Activated CD4-positive, alpha-beta T cell treated with anti-CD3 and anti-CD28 coated beads for 36 hours (primary cell): ENCODE measurements at regions of chr10 and their contacts with region 1.

Region 1: DNA sequence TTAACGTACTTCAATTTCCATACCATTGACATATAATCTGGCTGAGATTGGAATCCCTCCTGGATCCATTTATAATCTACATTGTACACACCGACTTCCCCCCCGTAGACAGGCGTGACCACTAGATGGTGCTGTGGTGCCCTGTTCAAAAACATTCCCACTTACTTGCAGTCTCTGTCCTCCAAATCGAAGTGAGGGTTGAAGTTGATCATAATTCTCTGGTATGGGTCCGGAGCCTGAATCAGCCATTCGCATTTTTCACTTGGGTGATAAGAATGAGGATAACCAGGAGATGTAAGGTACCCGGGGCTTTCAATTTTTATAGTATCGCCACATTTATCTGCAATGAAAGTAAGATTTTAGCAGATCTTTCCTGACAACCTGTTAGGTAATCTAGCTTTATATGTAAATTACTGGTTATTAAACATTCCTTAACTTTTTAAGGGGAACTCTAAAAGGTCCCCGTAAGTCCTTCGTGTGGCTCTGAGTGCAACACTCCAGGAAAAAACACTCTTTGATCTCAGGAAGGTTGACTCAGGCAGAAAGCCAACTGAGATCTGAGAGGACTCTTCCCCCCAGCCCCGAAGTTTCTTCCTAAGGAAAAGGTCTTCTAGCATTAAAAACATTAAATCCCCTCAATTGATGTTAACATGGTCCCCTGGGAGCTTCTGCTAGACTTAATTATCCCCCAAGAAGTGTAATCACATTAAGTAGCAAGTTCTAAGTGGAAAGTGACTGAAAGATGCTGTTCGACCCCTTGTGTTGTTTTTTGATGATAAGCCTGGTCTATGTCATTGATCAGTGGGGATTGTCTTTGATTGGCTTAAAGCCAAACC is 3.7 kb downstream of the NRP1 start:
- DNase-seq: peak; percentile 89
- ATAC-seq: peak; percentile 37
- H3K4me3 Mint-ChIP-seq: no peak overlapping the region
- H3K27ac Mint-ChIP-seq: no peak overlapping the region
- H3K4me1 Mint-ChIP-seq: peaks cover 16% of the 10 kb centered on the region
- H3K27me3 Mint-ChIP-seq: peaks cover 62% of the 10 kb centered on the region

Region 2: DNA sequence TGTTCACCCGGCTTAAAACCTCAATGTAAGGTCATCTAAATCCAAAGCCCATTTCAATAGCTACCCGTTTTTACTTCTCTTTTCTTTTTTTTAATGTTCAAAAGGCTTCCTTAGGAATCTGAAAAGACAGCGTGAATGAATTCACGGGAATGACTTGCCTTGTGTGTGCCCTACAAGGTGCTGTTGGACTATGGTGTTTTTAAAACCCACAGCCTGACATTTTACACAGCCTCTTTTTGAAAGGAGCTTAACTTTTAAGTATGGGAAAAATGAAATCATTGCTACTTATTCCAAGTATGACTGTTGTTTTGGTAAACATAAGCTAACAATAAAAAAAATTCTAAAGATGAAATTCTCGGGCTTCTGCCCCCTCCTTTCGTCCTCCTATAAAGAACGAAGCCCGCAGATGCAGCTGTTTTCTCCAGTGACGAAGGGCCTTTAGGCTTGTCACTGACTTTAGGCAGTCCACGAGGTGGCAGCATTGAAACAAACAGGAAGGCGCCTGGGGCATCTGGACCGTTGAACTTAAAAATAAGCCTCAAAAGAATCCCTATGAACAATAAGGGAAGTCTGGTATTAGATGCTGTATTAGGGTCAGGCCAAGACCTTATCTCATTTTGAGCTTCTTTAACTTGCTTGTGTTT is 137.6 kb before region 1 on chr10:
- CTCF ChIA-PET with region 1: interaction called, 23 read pairs
- POLR2A ChIA-PET with region 1: no interaction called
- intact Hi-C with region 1: loop called (anchors 1 to 2 kb)
- DNase-seq: peak; percentile 88
- ATAC-seq: peak; percentile 88
- H3K4me3 Mint-ChIP-seq: no peak overlapping the region
- H3K27ac Mint-ChIP-seq: no peak overlapping the region
- H3K4me1 Mint-ChIP-seq: no peaks in the 10 kb centered on the region
- H3K27me3 Mint-ChIP-seq: peaks cover 26% of the 10 kb centered on the region

Region 3: DNA sequence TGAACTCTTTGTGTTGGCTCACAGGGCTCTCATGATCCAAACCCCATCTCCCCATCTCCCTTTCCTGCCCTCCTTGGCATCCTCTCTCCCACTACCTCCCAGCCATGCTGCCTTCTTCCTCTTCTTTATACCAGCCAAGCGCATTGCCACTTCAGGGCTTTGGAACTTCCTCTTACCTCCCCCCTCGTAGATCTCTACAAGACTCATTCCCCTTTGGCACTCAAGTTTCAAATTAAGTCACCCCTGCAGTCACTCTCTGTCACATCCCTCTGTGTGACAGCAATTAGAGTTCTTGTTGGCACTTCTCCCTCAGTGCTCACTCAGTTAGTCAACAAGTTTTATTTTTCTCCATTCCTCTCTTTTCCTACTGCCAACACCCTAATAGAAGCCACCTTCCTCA is 24.5 kb after region 1 on chr10:
- CTCF ChIA-PET with region 1: no interaction called
- POLR2A ChIA-PET with region 1: no interaction called
- intact Hi-C with region 1: no loop called
- DNase-seq: no peak
- ATAC-seq: peak; percentile 64
- H3K4me3 Mint-ChIP-seq: no peak overlapping the region
- H3K27ac Mint-ChIP-seq: no peak overlapping the region
- H3K4me1 Mint-ChIP-seq: no peaks in the 10 kb centered on the region
- H3K27me3 Mint-ChIP-seq: peaks cover 20% of the 10 kb centered on the region

Region 4: GRCh38 chr10:33381451-33382242 is 50.9 kb after region 1 on chr10:
- CTCF ChIA-PET with region 1: no interaction called
- POLR2A ChIA-PET with region 1: no interaction called
- intact Hi-C with region 1: no loop called
- DNase-seq: no peak
- ATAC-seq: no peak
- H3K4me3 Mint-ChIP-seq: no peak overlapping the region
- H3K27ac Mint-ChIP-seq: no peak overlapping the region
- H3K4me1 Mint-ChIP-seq: peaks cover 17% of the 10 kb centered on the region
- H3K27me3 Mint-ChIP-seq: peaks cover 28% of the 10 kb centered on the region

Region 5: GRCh38 chr10:33421789-33422462 is 91.2 kb after region 1 on chr10:
- CTCF ChIA-PET with region 1: no interaction called
- POLR2A ChIA-PET with region 1: no interaction called
- intact Hi-C with region 1: loop called in 1 of 2 experiments (anchors 10 kb)
- DNase-seq: no peak
- ATAC-seq: no peak
- H3K4me3 Mint-ChIP-seq: no peak overlapping the region
- H3K27ac Mint-ChIP-seq: no peak overlapping the region
- H3K4me1 Mint-ChIP-seq: no peaks in the 10 kb centered on the region
- H3K27me3 Mint-ChIP-seq: peaks cover 33% of the 10 kb centered on the region

Region 6: DNA sequence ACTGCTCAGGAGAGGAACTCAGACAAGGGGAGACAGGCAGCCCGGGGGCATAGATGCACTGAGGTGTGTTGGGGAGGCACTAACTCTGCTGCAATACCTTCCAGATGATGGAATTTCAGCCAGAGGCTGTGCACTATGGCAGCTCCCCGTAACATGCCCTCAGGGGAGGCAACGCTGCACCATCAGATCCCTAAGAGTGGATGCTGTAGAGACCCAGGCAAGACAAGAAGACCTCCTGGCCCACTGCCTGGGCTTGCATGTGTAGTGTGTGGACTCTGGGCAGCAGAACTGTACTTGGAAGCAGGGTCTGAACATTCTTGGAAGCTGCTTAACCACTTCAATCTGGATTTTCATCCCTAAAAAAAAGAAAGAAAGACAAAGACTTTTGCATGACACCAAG is 301.2 kb after region 1 on chr10:
- CTCF ChIA-PET with region 1: no interaction called
- POLR2A ChIA-PET with region 1: no interaction called
- intact Hi-C with region 1: loop called in 1 of 2 experiments (anchors 10 kb)
- DNase-seq: no peak
- ATAC-seq: no peak
- H3K4me3 Mint-ChIP-seq: no peak overlapping the region
- H3K27ac Mint-ChIP-seq: no peak overlapping the region
- H3K4me1 Mint-ChIP-seq: no peaks in the 10 kb centered on the region
- H3K27me3 Mint-ChIP-seq: peaks cover 7% of the 10 kb centered on the region

Region 7: GRCh38 chr10:33927347-33927746 is 596.6 kb after region 1 on chr10:
- CTCF ChIA-PET with region 1: no interaction called
- POLR2A ChIA-PET with region 1: no interaction called
- intact Hi-C with region 1: no loop called
- DNase-seq: no peak
- ATAC-seq: no peak
- H3K4me3 Mint-ChIP-seq: no peak overlapping the region
- H3K27ac Mint-ChIP-seq: no peak overlapping the region
- H3K4me1 Mint-ChIP-seq: no peaks in the 10 kb centered on the region
- H3K27me3 Mint-ChIP-seq: peaks cover 8% of the 10 kb centered on the region

Region 8: DNA sequence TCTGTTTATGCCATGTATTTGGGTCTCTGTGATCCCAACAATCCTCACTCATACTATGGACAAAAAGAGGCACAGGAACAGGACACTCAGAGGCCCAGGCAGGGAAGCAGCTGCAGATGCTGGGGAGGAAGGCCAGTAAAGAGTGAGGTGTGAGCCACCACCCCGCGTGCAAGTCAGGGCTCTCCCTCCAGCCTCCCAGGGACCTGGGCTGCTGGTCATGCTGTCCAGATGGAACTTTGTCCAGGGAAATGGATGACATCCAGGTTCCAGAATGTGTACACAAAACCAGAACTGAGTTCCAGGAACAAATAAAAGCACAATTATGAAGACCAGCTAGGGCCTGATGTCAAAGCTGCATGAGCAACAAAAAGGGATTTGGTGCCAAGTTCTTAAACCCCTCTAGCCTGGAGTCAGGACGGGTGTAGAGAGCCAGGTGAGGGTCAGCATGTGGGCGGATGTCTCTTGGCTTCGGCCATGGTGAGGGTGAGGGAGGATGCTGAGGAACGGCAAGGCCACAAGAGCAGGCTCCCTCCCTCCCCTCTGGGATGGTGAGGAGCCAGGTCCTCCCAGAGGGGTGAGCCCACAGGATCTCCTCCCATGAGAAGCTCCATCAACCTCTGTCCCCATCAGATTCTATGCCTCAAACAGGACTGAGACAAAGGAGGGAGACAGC is 744.6 kb after region 1 on chr10:
- CTCF ChIA-PET with region 1: no interaction called
- POLR2A ChIA-PET with region 1: no interaction called
- intact Hi-C with region 1: no loop called
- DNase-seq: no peak
- ATAC-seq: no peak
- H3K4me3 Mint-ChIP-seq: no peak overlapping the region
- H3K27ac Mint-ChIP-seq: no peak overlapping the region
- H3K4me1 Mint-ChIP-seq: no peaks in the 10 kb centered on the region
- H3K27me3 Mint-ChIP-seq: no peaks in the 10 kb centered on the region

Region 9: GRCh38 chr10:34637418-34637911 is 1306.7 kb after region 1 on chr10:
- CTCF ChIA-PET with region 1: interaction called, 5 read pairs
- POLR2A ChIA-PET with region 1: no interaction called
- intact Hi-C with region 1: loop called (anchors 1 kb)
- DNase-seq: peak; percentile 82
- ATAC-seq: peak; percentile 76
- H3K4me3 Mint-ChIP-seq: no peak overlapping the region
- H3K27ac Mint-ChIP-seq: no peak overlapping the region
- H3K4me1 Mint-ChIP-seq: peaks cover 13% of the 10 kb centered on the region
- H3K27me3 Mint-ChIP-seq: peaks cover 4% of the 10 kb centered on the region